ENCODE measurements at regions of chr5 and their contacts with region 1.

Region 1: DNA sequence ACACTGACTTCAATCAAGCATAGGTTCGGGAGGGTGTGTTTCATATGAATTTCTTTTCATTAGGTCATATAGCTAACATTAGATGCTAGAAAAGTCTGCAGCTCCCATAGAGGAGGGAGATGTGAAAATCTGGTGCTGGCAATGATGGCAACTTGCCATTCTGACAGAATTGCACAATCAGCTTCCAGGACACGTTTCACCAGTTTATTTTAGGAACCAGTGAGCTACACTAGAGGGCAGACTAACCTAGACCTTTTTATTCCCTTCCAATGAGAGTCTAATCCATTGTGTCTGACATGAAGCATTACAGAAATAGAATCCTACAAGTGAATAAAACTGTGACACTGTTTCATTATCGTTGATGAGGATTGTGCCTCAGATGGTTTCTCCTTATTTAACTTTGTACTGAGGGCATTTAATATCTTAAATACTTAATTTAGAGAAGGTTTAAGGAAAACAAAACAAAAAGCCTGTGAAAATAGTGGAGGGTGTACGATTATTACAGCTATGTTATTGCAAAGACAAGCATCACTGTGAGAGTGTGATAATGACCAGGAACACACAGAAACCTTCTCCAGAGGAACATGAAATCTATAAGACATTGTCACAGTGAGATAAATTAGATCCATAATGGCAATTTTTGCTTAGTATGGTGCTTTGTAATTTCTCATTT is 363.3 kb upstream of the RPS23 start:
- DNase-seq: peak; percentile 47
- CTCF ChIP-seq: peak; percentile 58

Region 2: DNA sequence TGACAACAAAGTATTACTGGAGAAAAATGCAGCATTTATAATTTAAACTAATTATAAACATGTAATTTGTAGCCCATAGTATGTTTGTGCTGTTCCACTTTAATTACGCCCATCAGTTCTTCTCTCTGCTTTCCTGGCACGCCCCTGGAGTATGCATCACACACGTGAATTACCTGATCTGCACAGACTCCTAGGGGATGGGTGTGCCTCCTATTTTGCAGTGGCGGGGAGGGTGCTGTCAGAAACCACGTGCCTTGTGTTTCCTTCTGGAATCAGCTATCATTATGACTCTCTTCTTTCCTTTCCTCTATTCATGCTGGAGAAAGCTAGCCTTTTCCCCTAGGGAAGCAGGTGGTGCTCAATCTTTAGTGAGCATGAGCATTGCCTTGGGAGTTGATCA is 406.6 kb before region 1 on chr5:
- in situ Hi-C with region 1: no loop called
- DNase-seq: no peak
- CTCF ChIP-seq: no peak

Region 3: GRCh38 chr5:82513738-82514137 is 127.7 kb before region 1 on chr5:
- in situ Hi-C with region 1: no loop called
- DNase-seq: no peak
- CTCF ChIP-seq: no peak

Region 4: DNA sequence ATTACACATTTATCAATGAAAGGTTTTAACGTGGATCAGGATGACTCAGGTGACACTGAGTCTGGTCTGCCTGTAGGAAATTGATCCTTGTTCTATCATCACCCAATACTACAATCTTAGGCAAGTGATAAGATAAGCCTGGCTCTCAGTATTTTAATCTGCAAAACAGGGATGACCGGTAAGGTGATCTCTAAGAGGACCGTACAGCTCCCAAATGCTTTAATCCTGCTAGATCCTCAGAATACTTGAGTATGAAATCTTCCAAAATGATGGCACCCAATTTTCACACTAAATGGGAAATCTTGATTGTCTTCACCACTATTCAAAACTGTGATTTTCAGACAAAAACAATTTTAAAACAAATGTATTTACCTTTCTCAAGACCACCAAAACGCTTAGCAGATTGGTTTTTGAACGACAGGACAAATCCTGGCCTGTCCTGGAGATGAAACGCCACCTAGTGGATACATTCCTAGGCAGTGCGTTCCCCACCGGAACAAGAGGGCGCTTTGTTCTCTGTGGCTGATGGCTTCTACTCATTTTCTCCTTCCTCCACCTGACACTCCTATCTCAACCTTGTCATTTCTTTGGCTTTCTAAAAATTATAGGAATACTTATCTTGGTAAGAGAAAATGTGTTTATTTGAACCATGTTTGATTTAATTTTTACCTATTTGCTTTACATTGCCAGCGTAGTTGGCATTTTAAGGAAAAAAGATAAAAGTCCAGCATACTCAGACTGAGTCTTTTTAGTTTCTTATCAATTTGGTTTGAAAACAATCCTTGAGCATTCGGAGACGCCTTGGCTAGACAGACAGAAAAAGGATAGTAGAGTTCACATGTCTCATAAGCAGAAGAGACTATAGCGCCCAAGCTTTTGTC is 788.9 kb after region 1 on chr5:
- in situ Hi-C with region 1: loop called (anchors 25 kb)
- DNase-seq: peak; percentile 40
- CTCF ChIP-seq: peak; percentile 75

Region 5: DNA sequence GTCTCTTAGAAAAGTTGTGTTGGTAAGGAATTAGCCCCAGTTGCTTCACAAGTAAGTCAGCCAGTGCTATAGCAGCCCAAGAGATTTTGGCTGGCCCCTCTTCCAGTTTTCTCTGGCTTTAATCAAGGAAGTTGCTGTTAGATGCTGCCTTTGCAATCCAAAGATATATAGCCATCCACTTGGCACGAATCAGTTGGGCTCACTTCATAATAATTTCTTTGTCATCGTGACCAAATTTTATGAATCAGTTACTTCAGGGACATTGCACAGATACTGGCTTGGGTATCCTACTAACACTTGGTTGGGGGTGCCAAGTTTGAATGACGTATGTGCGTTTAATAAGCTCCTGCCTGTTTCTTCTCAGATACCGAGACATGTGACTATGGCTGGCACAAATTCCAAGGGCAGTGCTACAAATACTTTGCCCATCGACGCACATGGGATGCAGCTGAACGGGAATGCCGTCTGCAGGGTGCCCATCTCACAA is 911.6 kb after region 1 on chr5:
- in situ Hi-C with region 1: loop called (anchors 10 kb)
- DNase-seq: no peak
- CTCF ChIP-seq: no peak